ENCODE measurements at regions of chr17 and their contacts with region 1.

Region 1: DNA sequence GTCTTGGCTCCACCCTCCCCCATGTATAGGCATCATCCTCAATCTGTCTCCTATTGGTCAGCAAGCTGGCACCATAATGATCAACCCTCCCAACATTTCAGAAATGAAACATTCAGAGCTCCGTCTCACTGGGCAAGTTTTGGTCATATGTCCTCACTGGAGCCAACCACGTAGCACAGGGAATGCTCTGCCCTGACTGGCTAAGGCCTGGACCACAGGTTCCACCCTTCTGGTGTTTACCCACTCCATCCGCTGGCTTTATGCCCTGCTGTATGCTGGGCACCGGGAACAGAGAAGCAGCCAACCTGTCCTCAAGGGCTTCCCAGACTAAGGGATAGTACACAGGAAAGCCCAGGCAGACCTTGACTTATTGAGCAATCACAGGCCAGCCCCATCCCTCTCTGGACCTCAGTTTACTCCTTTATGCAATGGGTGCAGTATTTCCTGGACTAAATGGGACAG is 20.5 kb downstream of the MYO15A start:
- DNase-seq: no peak
- H3K4me3 ChIP-seq: no peak overlapping the region
- H3K27me3 ChIP-seq: peaks cover 3% of the 10 kb centered on the region
- CTCF ChIP-seq: no peak

Region 2: GRCh38 chr17:18141210-18141803 is 12.2 kb after region 1 on chr17:
- CTCF ChIA-PET with region 1: interaction called, 19 read pairs
- POLR2A ChIA-PET with region 1: no interaction called
- DNase-seq: no peak
- H3K4me3 ChIP-seq: no peak overlapping the region
- H3K27me3 ChIP-seq: 0 out of 2 replicates have a peak, but pooled peaks cover 1% of the 10 kb centered on the region
- CTCF ChIP-seq: peak; percentile 58

Region 3: DNA sequence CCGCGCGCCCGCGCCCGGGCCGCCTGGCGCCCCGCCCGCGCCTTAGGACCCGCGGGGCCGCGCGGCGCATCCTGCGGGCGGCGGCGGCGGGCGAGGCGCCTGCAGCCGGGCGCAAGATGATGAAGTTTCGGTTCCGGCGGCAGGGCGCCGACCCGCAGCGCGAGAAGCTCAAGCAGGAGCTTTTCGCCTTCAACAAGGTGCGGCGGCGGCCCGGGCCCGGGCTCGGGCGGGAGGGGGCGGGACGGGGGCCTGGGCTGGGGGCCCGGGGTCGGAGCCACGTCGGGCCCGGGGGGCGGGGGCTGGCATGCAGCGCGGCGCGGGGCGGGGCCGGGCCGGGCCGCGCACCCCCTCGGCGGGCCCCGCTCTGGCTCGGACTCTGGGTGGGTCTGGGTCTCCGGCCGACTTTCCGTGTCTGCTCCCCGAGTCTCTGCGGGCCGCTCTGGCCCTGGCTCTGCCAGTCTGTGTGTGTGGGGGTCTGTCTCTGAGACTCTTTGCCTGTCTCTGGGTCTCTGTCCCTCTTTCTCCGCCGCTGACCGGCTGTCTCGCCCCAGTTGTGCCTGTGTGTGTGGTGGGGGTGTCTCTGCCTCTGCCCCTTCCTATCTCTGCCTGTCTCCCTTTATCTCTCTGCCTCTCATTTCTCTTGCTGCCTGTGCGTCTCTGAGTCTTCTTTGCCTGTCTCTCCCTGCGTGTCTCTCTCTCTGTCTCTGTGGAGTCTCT is 96.7 kb after region 1 on chr17 and contains the start of gene LLGL1:
- CTCF ChIA-PET with region 1: no interaction called
- POLR2A ChIA-PET with region 1: no interaction called
- DNase-seq: no peak
- H3K4me3 ChIP-seq: peak within 1 kb of the TSS; percentile 94
- H3K27me3 ChIP-seq: no peaks in the 10 kb centered on the region
- CTCF ChIP-seq: no peak
- polyA plus RNA-seq, gene LLGL1: 19.8 and 38.9 TPM in 2 replicates

Measured in BJ (cell line).